GM13976 (cell line): ENCODE measurements at regions of chr12 and their contacts with region 1.

Region 1: DNA sequence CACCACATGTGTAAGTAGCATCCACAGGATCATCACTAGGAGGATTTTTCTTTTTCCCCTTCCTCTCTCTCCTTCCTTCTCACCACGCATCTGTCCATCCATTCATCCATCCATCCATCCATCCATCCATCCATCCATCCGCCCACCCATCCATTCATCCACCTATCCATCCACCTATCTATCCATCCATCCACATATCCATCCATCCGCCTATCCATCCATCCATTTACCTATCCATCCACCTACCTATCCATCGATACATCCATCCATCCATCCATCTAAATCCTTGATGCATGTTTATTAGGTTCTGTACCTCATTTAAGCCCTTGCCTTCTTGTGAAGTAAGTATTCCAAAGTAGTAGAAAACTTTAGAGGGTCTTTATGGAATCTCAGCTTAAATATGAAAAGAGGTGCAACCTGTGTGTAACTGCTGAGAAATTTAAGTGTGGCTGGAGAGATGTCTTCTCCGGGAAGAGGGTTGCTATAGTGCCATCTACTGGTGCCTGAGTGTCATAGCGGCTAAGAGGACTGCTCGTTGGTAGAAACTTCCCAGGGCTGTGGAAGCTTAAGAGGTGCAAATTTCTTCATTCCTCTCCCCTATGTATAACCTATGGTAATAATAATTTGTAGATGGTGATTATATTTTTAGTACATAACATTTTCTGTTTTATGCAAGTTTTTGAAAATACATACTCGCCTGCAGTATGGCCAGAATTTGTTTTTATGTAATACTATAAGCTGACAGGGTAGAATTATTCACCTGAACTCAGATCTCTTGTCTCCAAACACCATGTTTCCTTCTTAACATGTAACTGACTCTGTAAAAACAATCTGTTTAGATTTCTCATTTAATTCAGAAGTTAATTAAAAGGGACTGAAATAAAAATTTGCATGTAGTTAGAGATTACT is 46.0 kb downstream of the MYO1H start:
- DNase-seq: peak; percentile 79
- CTCF ChIP-seq: peak; percentile 74

Region 2: DNA sequence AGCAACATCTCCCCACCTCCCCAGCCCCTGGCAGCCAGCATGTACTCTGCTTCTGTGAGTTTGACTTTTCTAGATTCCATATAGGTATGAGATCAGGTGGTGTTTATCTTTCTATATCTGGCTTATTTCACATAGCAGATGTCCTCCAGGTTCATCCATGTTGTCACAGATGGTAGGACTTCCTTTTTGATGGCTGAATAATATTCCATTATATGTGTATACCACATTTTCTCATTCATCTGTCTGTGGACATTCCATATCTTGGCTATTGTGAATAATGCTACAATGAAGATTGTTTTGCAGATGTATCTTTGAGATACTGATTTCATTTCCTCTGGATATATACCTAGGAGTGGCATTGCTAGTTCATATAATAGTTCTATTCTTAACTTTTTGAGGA is 318.8 kb before region 1 on chr12:
- in situ Hi-C with region 1: no loop called
- DNase-seq: no peak
- CTCF ChIP-seq: no peak

Region 3: DNA sequence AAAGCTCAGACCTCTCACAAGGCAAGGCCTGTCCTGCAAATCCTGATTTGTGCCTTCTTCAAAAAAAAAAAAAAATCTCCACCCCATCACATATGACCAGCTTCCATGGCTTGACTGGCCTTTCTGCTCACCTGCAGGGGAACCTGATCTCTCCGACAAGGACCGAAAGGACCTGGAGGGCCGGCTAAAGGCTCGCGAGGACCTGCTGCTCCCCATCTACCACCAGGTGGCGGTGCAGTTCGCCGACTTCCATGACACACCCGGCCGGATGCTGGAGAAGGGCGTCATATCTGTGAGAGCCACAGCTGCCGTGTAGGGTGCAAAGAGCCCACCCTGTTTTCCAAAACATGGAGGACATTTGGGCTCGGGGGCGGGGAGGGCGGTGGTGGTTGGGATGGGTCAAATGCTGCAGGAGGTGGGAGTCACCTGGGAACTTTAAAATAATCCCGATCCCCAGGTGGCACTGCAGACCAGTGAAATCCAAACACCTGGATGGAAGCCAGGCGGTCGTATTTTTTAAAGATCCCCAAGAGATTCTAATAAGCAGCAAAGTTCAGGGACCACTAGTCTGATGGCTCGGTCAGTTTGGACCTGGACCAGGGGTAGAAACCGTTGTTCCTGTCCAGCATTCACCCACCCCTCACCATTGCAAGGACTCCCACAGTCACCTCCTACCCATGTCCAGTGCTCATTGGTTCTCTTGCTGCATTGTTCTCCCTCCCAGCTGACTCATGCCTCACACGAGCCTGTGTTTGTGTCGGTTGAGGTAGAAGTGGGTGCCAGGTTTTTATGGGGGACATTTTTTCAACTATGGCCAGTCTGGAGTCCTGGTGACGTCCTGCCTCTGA is 129.4 kb before region 1 on chr12:
- in situ Hi-C with region 1: loop called (anchors 10 kb)
- DNase-seq: peak; percentile 87
- CTCF ChIP-seq: peak; percentile 70